Gastrocnemius medialis (tissue), 4 donors: ENCODE measurements at regions of chr16 and their contacts with region 1.

Region 1: GRCh38 chr16:13036600-13036999 is 135.2 kb downstream of the SHISA9 start:
- DNase-seq: no peak
- ATAC-seq: no peak
- H3K4me3 ChIP-seq: no peak overlapping the region
- H3K27ac ChIP-seq: no peak overlapping the region
- H3K4me1 ChIP-seq: no peaks in the 10 kb centered on the region
- H3K27me3 ChIP-seq: no peaks in the 10 kb centered on the region
- CTCF ChIP-seq: no peak
- POLR2A ChIP-seq: no peak

Region 2: GRCh38 chr16:12925026-12925800 is 111.4 kb before region 1 on chr16:
- in situ Hi-C with region 1: loop called in 1 of 4 experiments (anchors 25 kb)
- intact Hi-C with region 1: no loop called
- DNase-seq: no peak
- ATAC-seq: no peak
- H3K4me3 ChIP-seq: no peak overlapping the region
- H3K27ac ChIP-seq: no peak overlapping the region
- H3K4me1 ChIP-seq: no peaks in the 10 kb centered on the region
- H3K27me3 ChIP-seq: no peaks in the 10 kb centered on the region
- CTCF ChIP-seq: no peak
- POLR2A ChIP-seq: no peak

Region 3: GRCh38 chr16:13148836-13149235 is 112.2 kb after region 1 on chr16:
- in situ Hi-C with region 1: loop called in 1 of 4 experiments (anchors 25 kb)
- intact Hi-C with region 1: no loop called
- DNase-seq: no peak
- ATAC-seq: no peak
- H3K4me3 ChIP-seq: no peak overlapping the region
- H3K27ac ChIP-seq: no peak overlapping the region
- H3K4me1 ChIP-seq: no peaks in the 10 kb centered on the region
- H3K27me3 ChIP-seq: no peaks in the 10 kb centered on the region
- CTCF ChIP-seq: no peak
- POLR2A ChIP-seq: no peak

Region 4: DNA sequence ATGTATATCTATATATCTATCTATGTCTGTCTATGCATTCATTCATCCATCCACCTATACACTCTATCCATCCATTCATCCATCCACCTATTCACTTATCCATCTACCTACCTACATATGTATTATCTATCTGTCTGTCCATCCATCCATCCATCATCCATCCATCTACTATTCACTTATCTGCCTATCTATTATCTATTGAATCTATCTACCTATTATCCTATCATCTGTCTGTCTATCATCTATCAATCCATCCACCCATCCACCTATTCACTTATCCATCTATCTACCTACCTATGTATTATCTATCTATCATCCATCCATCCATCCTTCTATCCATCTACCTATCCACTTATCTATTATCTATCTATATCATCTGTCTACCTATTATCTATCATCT is 167.1 kb after region 1 on chr16:
- in situ Hi-C with region 1: no loop called
- intact Hi-C with region 1: no loop called
- DNase-seq: no peak
- ATAC-seq: no peak
- H3K4me3 ChIP-seq: no peak overlapping the region
- H3K27ac ChIP-seq: no peak overlapping the region
- H3K4me1 ChIP-seq: no peaks in the 10 kb centered on the region
- H3K27me3 ChIP-seq: no peaks in the 10 kb centered on the region
- CTCF ChIP-seq: no peak
- POLR2A ChIP-seq: no peak